ENCODE measurements at regions of chr18 and their contacts with region 1.

Region 1: GRCh38 chr18:4004183-4004829 is 450.8 kb downstream of the DLGAP1 start:
- DNase-seq: no peak
- H3K4me3 ChIP-seq: no peak overlapping the region
- H3K27ac ChIP-seq: no peak overlapping the region
- H3K4me1 ChIP-seq: no peaks in the 10 kb centered on the region
- H3K27me3 ChIP-seq: no peaks in the 10 kb centered on the region
- CTCF ChIP-seq: no peak
- POLR2A ChIP-seq: no peak

Region 2: DNA sequence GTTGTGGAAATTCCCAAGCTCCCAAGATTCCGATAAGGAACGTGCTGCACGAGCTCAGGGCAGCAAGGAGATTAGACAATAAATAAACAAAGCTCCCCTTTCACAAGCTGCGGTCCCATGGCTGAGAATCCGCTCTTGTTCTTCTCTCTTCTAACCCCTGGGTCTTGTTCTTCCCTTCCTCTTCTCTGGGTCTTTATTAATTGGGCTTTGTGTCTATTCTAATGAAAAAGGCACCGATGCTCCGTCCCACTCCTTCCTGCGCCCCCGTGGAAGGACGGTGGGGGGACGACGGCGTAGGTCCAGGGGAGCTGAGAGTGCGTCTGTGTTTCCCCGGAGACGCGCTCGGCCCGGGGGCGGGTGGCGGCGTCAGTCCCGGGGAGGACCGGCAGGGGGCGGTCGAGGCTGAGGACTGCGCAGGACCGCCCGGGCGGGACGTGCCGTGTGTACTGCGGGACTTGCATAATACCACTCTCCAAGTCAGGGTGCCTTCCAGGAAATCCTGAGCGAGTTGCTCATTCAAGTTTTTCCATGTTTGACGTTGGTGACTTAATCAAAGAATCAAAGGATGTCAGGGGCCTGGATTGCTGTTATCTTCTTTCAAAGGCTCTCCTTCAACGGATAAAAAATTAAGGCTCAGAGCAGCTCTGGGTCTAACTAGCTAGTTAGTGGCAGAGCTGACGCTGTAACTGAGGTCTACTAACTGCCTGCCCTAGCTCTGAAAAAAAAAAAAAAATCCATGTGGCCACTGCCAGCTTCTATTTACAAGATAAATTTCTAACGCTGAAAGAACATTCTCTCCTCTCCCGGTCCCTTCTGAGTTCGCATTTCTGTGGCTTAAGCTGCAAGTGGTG is 233.0 kb before region 1 on chr18:
- intact Hi-C with region 1: loop called (anchors 10 kb)
- DNase-seq: peak; percentile 94
- H3K4me3 ChIP-seq: peak overlapping the region; percentile 3 to 27
- H3K27ac ChIP-seq: peak overlapping the region; percentile 9 to 66
- H3K4me1 ChIP-seq: peaks cover 4% of the 10 kb centered on the region
- H3K27me3 ChIP-seq: no peaks in the 10 kb centered on the region
- CTCF ChIP-seq: peak; percentile 97 to 98 (median 98)
- POLR2A ChIP-seq: no peak

Region 3: DNA sequence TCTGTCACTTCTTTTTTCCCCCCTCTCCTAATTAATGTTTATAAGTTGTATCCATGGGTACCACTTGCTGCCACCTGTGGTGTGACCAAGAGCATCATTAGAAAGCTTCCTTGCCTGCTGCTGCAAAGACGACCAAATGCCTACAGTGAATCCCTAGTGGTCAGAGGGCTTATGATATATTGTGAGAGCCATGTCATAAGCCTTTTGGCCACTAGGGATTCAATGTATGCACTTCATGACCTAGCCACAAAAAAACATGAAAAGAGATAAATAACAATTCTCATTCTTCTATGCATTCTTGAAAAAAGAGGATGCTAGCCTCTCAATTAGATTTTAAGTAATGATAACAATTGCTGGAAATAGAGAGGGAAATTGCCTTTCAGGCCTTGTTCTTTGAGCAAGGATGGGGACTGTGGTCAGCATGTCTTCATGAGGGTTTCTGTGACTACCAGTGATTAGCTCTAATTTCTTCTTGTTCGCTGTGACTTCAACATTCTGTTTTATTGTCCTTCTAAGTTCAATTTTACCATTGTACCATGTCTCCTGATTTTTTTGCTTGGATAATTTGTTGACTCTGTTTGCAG is 119.0 kb before region 1 on chr18:
- intact Hi-C with region 1: no loop called
- DNase-seq: no peak
- H3K4me3 ChIP-seq: no peak overlapping the region
- H3K27ac ChIP-seq: no peak overlapping the region
- H3K4me1 ChIP-seq: peaks cover 4% of the 10 kb centered on the region
- H3K27me3 ChIP-seq: no peaks in the 10 kb centered on the region
- CTCF ChIP-seq: peak in 2 of 3 experiments; percentile 25
- POLR2A ChIP-seq: no peak

Measured in testis (tissue), 5 donors.